CD14-positive monocyte (primary cell): ENCODE measurements at regions of chr2 and their contacts with region 1.

Region 1: GRCh38 chr2:238370823-238371372 is 50.6 kb downstream of the TRAF3IP1 start:
- DNase-seq: peak; percentile 73 to 77 (median 76)
- H3K4me3 ChIP-seq: no peak overlapping the region
- H3K4me3 Mint-ChIP-seq: peak overlapping the region; percentile 11 to 79
- H3K27ac ChIP-seq: no peak overlapping the region
- H3K27ac Mint-ChIP-seq: no peak overlapping the region
- H3K4me1 ChIP-seq: peaks cover 16 to 18% of the 10 kb centered on the region in 2 donors
- H3K4me1 Mint-ChIP-seq: peaks cover 42% of the 10 kb centered on the region
- H3K27me3 ChIP-seq: no peaks in the 10 kb centered on the region
- H3K27me3 Mint-ChIP-seq: peaks cover 0 to 4% (median 0%) of the 10 kb centered on the region in 3 donors
- CTCF ChIP-seq: peak; percentile 80

Region 2: GRCh38 chr2:238155051-238155760 is 215.7 kb before region 1 on chr2:
- intact Hi-C with region 1: no loop called
- DNase-seq: no peak
- H3K4me3 ChIP-seq: no peak overlapping the region
- H3K4me3 Mint-ChIP-seq: no peak overlapping the region
- H3K27ac ChIP-seq: no peak overlapping the region
- H3K27ac Mint-ChIP-seq: no peak overlapping the region
- H3K4me1 ChIP-seq: peaks cover 7 to 8% of the 10 kb centered on the region in 2 donors
- H3K4me1 Mint-ChIP-seq: peaks cover 9% of the 10 kb centered on the region
- H3K27me3 ChIP-seq: peaks cover 7 to 25% of the 10 kb centered on the region in 2 donors
- H3K27me3 Mint-ChIP-seq: peaks cover 19 to 27% (median 21%) of the 10 kb centered on the region in 3 donors
- CTCF ChIP-seq: no peak

Region 3: GRCh38 chr2:238207006-238207405 is 163.9 kb before region 1 on chr2:
- intact Hi-C with region 1: no loop called
- DNase-seq: no peak
- H3K4me3 ChIP-seq: no peak overlapping the region
- H3K4me3 Mint-ChIP-seq: no peak overlapping the region
- H3K27ac ChIP-seq: no peak overlapping the region
- H3K27ac Mint-ChIP-seq: no peak overlapping the region
- H3K4me1 ChIP-seq: peaks cover 19 to 20% of the 10 kb centered on the region in 2 donors
- H3K4me1 Mint-ChIP-seq: peaks cover 16% of the 10 kb centered on the region
- H3K27me3 ChIP-seq: peaks cover 10 to 21% of the 10 kb centered on the region in 2 donors
- H3K27me3 Mint-ChIP-seq: peaks cover 7 to 11% (median 9%) of the 10 kb centered on the region in 3 donors
- CTCF ChIP-seq: no peak

Region 4: DNA sequence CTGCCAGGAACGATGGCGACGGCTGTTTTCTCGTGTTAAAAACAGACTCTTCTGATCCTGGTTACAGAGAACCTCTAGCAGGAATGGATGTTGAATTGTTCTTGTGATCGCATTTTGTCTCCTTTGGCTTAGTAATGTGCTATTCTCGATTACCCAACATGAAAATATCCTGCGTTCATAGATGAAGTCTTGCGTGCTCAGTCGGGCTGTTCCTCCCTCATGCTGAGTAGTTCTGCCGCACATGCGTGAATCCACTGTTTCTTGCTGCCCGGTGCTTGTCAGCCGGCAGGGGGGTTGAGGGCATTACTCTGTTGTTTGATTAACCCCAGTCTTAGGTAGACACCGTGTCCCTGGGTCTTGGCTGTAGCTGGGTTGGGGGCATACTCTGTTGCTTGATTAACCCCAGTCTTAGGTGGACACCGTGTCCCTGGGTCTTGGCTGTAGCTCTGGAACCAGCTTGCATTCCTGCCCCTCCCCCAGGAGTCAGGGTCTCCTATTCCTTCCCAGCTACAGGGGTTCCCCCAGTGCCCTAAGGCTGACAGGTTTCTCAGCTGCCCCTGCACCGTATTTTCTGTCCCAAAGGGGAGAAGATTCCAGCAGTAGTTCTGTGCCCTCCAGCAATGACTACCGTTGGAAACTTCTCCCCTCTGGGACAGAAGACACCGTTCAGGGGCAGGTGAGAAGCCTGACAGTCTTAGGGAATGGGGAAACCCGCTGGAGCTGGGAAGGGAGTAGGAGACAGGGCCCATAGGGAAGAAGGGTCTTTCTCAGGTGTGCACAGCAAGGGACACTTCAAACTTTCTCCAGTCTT is 33.7 kb after region 1 on chr2:
- intact Hi-C with region 1: loop called in 1 of 2 experiments (anchors 5 kb)
- DNase-seq: no peak
- H3K4me3 ChIP-seq: no peak overlapping the region
- H3K4me3 Mint-ChIP-seq: no peak overlapping the region
- H3K27ac ChIP-seq: no peak overlapping the region
- H3K27ac Mint-ChIP-seq: no peak overlapping the region
- H3K4me1 ChIP-seq: peaks cover 13 to 15% of the 10 kb centered on the region in 2 donors
- H3K4me1 Mint-ChIP-seq: peaks cover 13% of the 10 kb centered on the region
- H3K27me3 ChIP-seq: no peaks in the 10 kb centered on the region
- H3K27me3 Mint-ChIP-seq: peaks cover 0 to 2% (median 2%) of the 10 kb centered on the region in 3 donors
- CTCF ChIP-seq: no peak

Region 5: DNA sequence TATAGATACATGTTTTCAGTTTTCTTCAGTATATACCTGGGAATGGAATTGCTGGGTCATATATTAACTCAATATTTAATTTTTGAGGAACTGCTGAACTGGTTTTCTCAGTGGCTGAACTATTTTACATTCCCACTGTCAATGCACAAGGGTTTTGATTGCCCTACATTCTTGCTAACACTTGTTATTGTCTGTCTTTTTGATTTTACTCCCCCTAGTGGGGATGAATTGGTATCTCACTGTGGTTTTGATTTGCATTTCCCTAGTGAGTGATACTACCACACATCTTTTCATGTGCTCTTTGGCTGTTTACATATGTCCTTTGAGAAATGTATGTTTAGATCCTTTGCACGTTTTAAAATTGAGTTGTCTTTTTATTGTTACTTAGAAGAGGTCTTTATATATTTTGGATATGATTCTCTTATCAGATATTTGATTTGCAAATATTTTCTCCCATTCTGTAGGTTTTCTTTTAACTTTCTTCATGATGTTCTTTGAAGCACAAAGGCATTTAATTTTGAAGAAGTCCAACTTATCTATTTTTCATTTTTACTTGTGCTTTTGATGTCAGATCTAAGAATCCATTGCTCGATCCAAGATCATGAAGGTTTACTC is 92.0 kb after region 1 on chr2:
- intact Hi-C with region 1: loop called (anchors 2 to 5 kb)
- DNase-seq: peak; percentile 36 to 49 (median 48)
- H3K4me3 ChIP-seq: no peak overlapping the region
- H3K4me3 Mint-ChIP-seq: no peak overlapping the region
- H3K27ac ChIP-seq: no peak overlapping the region
- H3K27ac Mint-ChIP-seq: no peak overlapping the region
- H3K4me1 ChIP-seq: no peaks in the 10 kb centered on the region
- H3K4me1 Mint-ChIP-seq: peaks cover 1% of the 10 kb centered on the region
- H3K27me3 ChIP-seq: no peaks in the 10 kb centered on the region
- H3K27me3 Mint-ChIP-seq: peaks cover 0 to 7% (median 5%) of the 10 kb centered on the region in 3 donors
- CTCF ChIP-seq: peak; percentile 87

Region 6: GRCh38 chr2:238484522-238485452 is 113.9 kb after region 1 on chr2:
- intact Hi-C with region 1: no loop called
- DNase-seq: no peak
- H3K4me3 ChIP-seq: no peak overlapping the region
- H3K4me3 Mint-ChIP-seq: no peak overlapping the region
- H3K27ac ChIP-seq: no peak overlapping the region
- H3K27ac Mint-ChIP-seq: no peak overlapping the region
- H3K4me1 ChIP-seq: no peaks in the 10 kb centered on the region
- H3K4me1 Mint-ChIP-seq: no peaks in the 10 kb centered on the region
- H3K27me3 ChIP-seq: no peaks in the 10 kb centered on the region
- H3K27me3 Mint-ChIP-seq: peaks cover 1 to 2% (median 1%) of the 10 kb centered on the region in 3 donors
- CTCF ChIP-seq: no peak